ENCODE measurements at regions of chr4 and their contacts with region 1.

Region 1: GRCh38 chr4:108160741-108161352 is 7.9 kb downstream of the LEF1 start:
- DNase-seq: no peak
- ATAC-seq: no peak

Region 2: DNA sequence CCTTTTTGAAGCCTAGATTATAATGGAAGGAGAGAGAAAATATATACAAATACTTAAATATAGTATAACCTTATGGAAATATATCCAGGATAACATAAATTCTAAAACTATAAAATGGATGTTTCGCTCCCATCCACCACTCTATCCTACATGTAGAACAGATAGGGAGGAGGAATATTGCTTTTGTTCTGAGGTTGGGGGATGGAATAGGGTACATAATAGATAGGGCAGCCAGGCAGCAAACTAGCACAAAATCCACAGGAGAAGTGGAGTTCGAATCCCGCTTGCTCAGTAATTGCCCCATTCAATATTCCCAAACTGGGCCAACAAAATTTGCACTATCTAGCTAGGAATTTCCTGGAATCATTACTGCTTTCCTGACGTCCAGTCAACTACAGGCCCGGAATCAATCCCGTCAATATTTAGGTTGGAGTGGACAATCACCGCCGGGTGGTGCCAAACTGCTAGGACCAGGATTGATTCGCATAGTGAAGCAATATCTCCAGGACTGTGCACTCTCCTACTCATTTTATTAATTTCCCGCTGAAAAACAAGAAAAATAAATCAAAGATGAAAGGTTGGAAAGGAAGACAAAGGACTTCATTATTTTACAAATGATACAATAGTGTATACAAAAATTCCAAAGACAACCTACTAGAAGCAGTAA is 400.4 kb before region 1 on chr4:
- intact Hi-C with region 1: no loop called
- DNase-seq: no peak
- ATAC-seq: no peak

Region 3: DNA sequence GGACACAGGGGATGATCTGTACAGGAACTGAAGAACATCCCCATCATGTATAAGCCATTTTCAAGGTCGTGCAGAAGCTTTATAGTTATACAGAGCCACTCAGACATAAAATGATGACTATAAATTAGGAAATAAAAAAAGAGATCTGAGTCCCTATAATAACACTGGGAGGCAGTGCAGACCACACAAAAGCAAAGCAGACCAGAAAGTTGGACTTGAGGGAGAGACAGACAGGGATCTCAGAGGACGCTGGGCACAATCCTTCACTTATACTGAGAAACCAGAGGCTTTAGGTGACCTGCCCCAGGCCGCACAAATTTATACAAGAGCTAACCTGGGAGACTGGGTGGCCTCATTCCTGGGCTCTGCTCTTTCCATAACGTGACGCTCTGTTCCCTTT is 100.7 kb before region 1 on chr4:
- intact Hi-C with region 1: loop called (anchors 5 kb)
- DNase-seq: no peak
- ATAC-seq: peak; percentile 59

Region 4: DNA sequence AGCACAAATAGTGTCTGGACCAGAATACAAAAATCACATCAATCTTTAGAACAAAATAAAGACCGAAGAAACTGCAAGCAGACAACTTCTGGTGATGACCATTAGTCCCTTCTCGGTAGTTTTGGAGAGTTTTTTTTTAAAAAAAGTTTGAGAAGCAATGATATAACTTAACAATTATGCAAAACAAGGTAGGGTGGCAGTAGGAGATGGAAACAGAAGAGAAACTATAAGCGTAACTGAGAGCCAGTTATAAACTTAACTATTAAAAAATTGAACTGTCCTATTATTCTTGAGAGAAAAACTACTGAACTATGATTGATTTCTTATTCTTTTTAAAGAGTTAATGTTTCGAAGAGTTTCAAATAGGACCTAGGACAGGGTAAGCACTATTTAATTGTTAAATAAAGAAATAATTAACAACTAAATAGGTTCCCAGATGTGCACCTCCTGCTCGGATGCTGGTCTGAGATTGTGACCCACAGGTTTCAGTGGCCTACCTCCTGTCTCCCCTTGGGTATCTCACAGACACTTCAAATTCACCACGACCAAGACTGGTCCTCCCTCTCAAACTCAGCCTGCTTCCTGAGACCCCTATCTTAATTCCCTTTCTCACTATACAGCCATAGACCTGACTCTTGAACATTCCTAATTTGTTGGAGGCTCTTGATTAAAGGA is 73.4 kb before region 1 on chr4:
- intact Hi-C with region 1: no loop called
- DNase-seq: no peak
- ATAC-seq: no peak

Region 5: GRCh38 chr4:108527723-108528122 is 366.9 kb after region 1 on chr4:
- intact Hi-C with region 1: no loop called
- DNase-seq: no peak
- ATAC-seq: no peak

Measured in left ventricle myocardium superior (tissue), 1 donor.